ENCODE measurements at regions of chr1 and their contacts with region 1.

Region 1: GRCh38 chr1:45521398-45522323 is at the start of gene PRDX1:
- DNase-seq: peak; percentile 95
- CTCF ChIP-seq: no peak

Region 2: GRCh38 chr1:45011837-45012638 is 509.6 kb before region 1 on chr1 and contains the start of gene UROD:
- CTCF ChIA-PET with region 1: interaction called, 3 read pairs
- POLR2A ChIA-PET with region 1: interaction called, 10 read pairs
- DNase-seq: peak; percentile 95
- CTCF ChIP-seq: no peak

Region 3: DNA sequence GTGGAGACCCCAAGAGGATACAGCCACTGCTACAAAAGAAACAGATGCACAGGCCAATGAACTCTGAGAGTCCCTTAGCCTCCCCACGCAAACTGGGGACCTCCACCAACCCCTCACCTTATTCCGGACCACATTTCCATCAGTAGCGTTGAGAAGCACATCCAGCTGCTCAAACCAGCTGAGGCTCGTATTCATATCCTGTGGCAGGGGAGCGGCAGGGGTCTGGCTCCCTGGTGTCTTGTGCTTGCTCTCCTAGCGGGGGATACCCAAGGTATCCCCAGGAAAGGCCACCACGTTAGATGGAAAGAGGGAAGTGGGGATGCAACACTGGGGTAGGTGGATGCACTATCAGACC is 22.3 kb before region 1 on chr1:
- CTCF ChIA-PET with region 1: interaction called, 6 read pairs
- POLR2A ChIA-PET with region 1: interaction called, 34 read pairs
- DNase-seq: no peak
- CTCF ChIP-seq: no peak

Region 4: GRCh38 chr1:45543581-45544417 is 22.1 kb after region 1 on chr1:
- CTCF ChIA-PET with region 1: interaction called, 6 read pairs
- POLR2A ChIA-PET with region 1: interaction called, 87 read pairs
- DNase-seq: peak; percentile 49
- CTCF ChIP-seq: no peak

Region 5: GRCh38 chr1:45583264-45583665 is 61.6 kb after region 1 on chr1:
- CTCF ChIA-PET with region 1: no interaction called
- POLR2A ChIA-PET with region 1: interaction called, 42 read pairs
- DNase-seq: peak; percentile 98
- CTCF ChIP-seq: no peak

Region 6: DNA sequence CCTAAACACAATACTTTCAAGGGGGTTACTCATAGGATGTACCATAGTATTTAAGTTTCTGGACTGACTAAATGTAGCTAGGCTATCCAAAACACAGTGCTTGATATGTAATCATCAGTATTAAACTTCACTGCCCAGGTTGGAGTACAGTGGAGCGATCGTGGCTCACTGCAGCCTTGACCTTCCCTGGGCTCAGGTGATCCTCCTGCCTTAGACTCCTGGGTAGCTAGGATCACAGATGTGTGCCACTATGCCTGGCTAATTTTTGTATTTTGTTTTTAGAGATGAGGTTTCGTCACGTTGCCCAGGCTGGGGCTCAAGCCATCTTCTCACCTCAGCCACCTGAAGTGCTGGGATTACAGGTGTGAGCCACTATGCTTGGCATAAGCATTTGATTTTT is 72.8 kb after region 1 on chr1:
- CTCF ChIA-PET with region 1: no interaction called
- POLR2A ChIA-PET with region 1: no interaction called
- DNase-seq: no peak
- CTCF ChIP-seq: no peak

Region 7: DNA sequence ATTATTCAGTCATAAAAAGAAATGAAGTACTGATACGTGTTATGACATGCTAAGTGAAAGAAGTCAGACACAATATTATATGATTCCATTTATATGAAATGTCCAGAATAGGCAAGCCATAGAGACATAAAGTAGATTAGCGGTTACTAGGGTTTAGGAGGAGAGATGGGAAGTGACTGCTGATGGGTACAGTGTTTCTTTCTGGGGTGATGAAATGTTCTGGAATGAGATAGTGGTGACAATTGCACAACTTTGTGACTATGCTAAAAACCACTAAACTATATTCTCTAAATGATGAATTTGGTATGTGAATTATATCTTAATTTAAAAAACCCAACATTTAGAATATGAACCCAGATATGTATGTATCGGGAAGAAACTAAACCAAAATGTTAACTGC is 201.1 kb after region 1 on chr1:
- CTCF ChIA-PET with region 1: no interaction called
- POLR2A ChIA-PET with region 1: no interaction called
- DNase-seq: no peak
- CTCF ChIP-seq: no peak

Region 8: DNA sequence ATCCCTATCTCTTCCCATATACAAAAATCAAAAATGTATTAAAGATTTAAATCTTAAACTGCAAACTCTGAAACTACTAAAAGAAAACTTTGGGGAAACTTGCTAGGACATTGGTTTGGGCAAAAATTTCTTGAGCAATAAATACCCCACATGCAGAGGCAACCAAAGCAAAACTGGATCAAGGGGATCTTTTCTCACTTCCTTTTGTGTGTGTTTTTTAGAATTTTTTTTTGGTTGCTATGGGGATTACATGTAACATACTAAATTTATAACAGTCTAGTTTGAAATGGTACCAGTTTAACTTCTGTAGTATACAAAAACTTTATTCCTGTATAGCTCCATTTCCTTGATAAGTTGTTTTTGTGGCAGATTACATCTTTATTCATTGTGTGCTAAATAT is 298.5 kb after region 1 on chr1:
- CTCF ChIA-PET with region 1: no interaction called
- POLR2A ChIA-PET with region 1: no interaction called
- DNase-seq: no peak
- CTCF ChIP-seq: no peak

Measured in GM10248 (cell line).